Activated naive CD4-positive, alpha-beta T cell treated with anti-CD3 and anti-CD28 coated beads for 36 hours (primary cell): ENCODE measurements at regions of chr2 and their contacts with region 1.

Region 1: DNA sequence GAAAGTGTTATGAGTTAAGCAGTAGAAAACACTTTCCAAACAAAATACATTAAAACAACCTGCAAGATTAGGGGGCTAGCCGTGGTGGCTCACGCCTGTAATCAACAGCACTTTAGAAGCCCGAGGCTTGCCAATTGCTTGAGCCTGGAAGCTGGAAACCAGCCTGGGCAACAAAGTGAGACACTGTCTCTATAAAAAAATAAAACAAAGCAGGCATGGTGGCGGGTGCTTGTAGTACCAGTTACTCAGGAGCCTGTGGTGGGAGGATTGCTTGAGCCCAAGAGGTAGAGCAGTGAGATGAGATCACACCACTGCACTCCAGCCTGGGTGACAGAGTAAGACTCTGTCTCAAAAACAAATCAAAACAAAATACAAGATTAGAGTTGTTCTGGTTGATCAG is 208.3 kb downstream of the ERBB4 start:
- DNase-seq: no peak
- H3K4me3 Mint-ChIP-seq: no peak overlapping the region
- H3K27ac Mint-ChIP-seq: no peak overlapping the region
- H3K4me1 Mint-ChIP-seq: no peaks in the 10 kb centered on the region
- H3K27me3 Mint-ChIP-seq: no peaks in the 10 kb centered on the region

Region 2: GRCh38 chr2:212311807-212312404 is 18.4 kb before region 1 on chr2:
- CTCF ChIA-PET with region 1: no interaction called
- intact Hi-C with region 1: loop called (anchors 1 kb)
- DNase-seq: no peak
- H3K4me3 Mint-ChIP-seq: no peak overlapping the region
- H3K27ac Mint-ChIP-seq: no peak overlapping the region
- H3K4me1 Mint-ChIP-seq: no peaks in the 10 kb centered on the region
- H3K27me3 Mint-ChIP-seq: no peaks in the 10 kb centered on the region